IMR-90 (cell line): ENCODE measurements at regions of chr12 and their contacts with region 1.

Region 1: DNA sequence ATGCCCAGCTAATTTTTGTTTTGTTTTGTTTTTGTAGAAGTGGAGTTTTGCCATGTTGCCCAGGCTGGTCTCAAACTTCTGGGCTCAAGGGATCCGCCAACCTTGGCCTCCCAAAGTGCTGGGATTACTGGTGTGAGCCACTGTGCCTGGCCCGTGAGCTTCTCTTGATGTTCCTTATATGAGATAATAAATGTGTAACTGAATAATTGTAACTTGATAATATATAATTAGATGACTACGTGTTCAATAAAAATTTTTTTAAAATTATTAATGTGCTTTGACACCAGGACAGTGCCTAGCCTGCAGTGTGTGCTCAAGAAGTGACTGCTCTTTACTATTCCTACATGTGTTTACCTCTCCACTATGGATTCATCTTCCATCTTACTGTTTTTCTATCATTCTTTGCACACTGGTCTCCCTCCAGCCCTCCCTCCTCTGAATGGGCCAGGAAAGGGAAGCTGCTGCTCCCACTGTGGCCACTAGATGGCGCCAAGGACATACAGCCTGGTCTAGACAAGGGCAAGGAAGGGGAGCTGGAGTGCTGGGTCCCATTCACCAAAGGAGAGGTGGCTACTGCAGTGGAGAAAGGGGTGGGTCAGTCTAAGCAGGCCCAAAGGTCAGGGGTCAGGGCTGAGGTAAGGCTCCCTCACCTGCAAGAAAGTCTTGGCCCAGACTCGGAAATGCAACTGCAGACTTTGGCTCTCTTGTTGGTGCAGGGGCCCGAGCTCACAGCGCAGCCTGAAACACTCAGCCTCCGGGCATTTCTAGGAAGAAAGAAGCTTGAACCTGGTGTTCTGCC is 14.7 kb upstream of the ZNF385A start:
- DNase-seq: peak; percentile 78
- ATAC-seq: peak; percentile 96
- H3K4me3 ChIP-seq: no peak overlapping the region
- H3K27ac ChIP-seq: no peak overlapping the region
- H3K4me1 ChIP-seq: no peaks in the 10 kb centered on the region
- H3K27me3 ChIP-seq: no peaks in the 10 kb centered on the region
- CTCF ChIP-seq: peak; percentile 98
- POLR2A ChIP-seq: no peak
- RAD21 ChIP-seq: peak; percentile 97

Region 2: DNA sequence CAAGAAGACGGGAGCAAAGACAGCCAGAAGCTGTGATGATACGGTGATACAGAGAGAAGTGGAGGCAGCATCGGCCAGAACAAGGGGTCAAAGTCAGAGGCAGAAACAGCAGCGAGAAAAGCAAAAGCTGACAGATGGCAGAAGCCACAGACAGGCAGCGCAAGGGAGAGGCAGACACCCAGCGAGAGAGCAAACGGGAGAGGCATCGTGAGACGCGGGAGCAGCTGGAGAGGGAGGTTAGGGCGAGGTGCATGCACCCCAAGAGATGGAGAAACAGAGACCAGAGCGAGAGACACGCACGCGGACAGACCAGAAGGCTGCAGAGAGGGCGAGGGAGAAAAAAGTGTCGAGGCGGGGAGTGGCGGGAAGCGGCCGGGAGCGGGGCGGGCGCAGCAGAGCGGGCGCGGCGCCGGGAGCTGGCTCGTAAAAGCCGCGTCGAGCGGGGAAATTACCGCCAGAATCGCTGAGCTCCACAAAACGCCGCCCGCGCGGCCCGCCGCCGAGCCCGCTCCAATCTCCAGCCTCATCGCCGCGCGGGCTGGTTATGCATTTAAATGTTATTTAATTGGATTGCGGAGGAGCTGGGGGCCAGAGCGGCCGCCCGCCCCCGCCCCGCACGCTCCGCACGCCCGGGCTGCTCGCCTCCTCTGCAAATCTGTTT is 226.0 kb before region 1 on chr12:
- CTCF ChIA-PET with region 1: no interaction called
- POLR2A ChIA-PET with region 1: no interaction called
- dilution Hi-C with region 1: no loop called
- in situ Hi-C with region 1: no loop called
- intact Hi-C with region 1: no loop called
- DNase-seq: no peak
- ATAC-seq: peak; percentile 81
- H3K4me3 ChIP-seq: peak overlapping the region; percentile 31
- H3K27ac ChIP-seq: no peak overlapping the region
- H3K4me1 ChIP-seq: no peaks in the 10 kb centered on the region
- H3K27me3 ChIP-seq: peaks cover 56% of the 10 kb centered on the region
- CTCF ChIP-seq: no peak
- POLR2A ChIP-seq: no peak
- RAD21 ChIP-seq: no peak

Region 3: DNA sequence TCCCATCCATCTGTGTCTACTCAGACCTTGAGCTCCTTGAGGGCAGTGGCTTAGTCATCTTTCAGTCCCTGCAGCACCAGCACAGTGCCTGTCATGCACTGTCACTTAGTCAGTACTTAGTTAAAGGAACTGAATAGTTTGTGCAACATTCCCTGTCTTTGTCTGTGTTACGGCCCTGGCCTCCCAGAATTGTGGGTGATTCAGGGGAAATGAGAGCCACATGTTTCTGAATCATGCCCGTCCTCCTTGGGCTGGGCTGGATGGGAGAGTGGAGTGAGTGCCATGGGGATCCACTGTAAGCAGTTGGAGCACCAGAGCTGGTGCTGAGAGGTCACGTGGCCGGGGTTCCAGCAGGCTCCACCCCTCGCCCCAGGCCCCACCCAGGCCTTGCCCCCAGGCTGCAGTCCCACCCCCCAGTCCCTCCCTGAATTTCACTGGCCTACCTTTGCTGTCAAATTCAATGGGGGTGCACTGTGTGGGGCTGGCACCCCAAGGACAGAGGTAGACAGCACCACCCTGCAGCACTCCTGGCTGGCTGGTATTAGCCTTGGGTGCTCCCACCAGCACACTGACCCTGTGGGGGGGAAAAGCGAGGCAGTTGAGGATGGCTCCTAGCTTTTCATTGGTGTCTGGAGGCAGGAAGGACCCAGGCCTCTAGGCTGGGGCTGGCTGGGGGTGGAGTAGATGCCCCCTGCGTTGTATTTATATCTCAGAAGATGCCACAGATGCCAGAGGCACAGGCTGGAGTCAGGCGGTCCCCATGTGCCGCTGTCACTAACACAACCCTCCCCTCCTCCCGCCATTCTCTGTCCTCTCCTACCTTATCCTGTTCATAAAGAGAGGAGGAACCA is 12.4 kb after region 1 on chr12:
- CTCF ChIA-PET with region 1: interaction called, 15 read pairs
- POLR2A ChIA-PET with region 1: no interaction called
- dilution Hi-C with region 1: no loop called
- in situ Hi-C with region 1: no loop called
- intact Hi-C with region 1: no loop called
- DNase-seq: peak; percentile 96
- ATAC-seq: peak; percentile 89
- H3K4me3 ChIP-seq: no peak overlapping the region
- H3K27ac ChIP-seq: peak overlapping the region; percentile 36
- H3K4me1 ChIP-seq: peaks cover 30% of the 10 kb centered on the region
- H3K27me3 ChIP-seq: no peaks in the 10 kb centered on the region
- CTCF ChIP-seq: no peak
- POLR2A ChIP-seq: 0 out of 2 replicates have a peak, but pooled peaks have one; percentile 32
- RAD21 ChIP-seq: no peak; the same call in 1 of the 2 replicates

Region 4: GRCh38 chr12:54431911-54432814 is 33.0 kb after region 1 on chr12:
- CTCF ChIA-PET with region 1: interaction called, 77 read pairs
- POLR2A ChIA-PET with region 1: no interaction called
- dilution Hi-C with region 1: no loop called
- in situ Hi-C with region 1: no loop called
- intact Hi-C with region 1: no loop called
- DNase-seq: peak; percentile 80
- ATAC-seq: peak; percentile 58
- H3K4me3 ChIP-seq: no peak overlapping the region
- H3K27ac ChIP-seq: no peak overlapping the region
- H3K4me1 ChIP-seq: peaks cover 22% of the 10 kb centered on the region
- H3K27me3 ChIP-seq: no peaks in the 10 kb centered on the region
- CTCF ChIP-seq: no peak
- POLR2A ChIP-seq: no peak
- RAD21 ChIP-seq: no peak

Region 5: DNA sequence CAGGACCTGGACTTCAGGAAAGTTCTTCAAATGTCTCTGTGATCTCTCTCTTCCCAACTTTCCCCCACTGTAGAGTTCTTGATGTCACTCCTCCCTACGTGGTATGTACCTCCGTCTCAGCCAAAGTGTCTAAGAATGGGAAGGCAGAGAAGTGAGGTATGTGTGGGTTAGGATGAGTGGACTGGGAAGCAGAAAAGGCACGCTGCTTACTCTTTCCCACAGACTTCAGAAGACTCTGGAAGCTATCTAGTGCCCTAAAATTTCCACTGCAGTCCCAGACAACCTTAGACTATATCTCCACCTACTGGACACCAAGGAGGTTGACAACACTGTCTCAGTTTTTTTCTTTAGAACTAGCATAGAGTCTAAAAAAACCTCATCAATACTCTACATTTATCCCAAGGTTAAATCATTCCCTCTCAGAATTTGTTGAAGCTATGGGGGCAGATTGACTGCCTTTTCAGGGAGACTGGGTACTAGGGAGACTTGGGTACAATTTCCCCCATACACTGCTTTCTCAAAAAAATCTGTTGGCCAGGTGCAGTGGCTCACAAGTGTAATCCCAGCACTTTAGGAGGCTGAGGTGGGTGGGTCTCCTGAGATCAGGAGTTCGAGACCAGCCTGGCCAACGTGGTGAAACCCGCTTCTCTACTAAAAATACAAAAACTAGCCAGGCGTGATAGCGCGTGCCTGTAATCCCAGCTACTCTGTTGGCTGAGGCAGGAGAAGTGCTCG is 40.5 kb after region 1 on chr12:
- CTCF ChIA-PET with region 1: interaction called, 77 read pairs
- POLR2A ChIA-PET with region 1: no interaction called
- dilution Hi-C with region 1: no loop called
- in situ Hi-C with region 1: loop called (anchors 5 kb)
- intact Hi-C with region 1: loop called (anchors 1 kb)
- DNase-seq: peak; percentile 86
- ATAC-seq: peak; percentile 98
- H3K4me3 ChIP-seq: no peak overlapping the region
- H3K27ac ChIP-seq: no peak overlapping the region
- H3K4me1 ChIP-seq: peaks cover 4% of the 10 kb centered on the region
- H3K27me3 ChIP-seq: peaks cover 10% of the 10 kb centered on the region
- CTCF ChIP-seq: peak; percentile 95
- POLR2A ChIP-seq: no peak
- RAD21 ChIP-seq: peak; percentile 96

Region 6: GRCh38 chr12:54853995-54854566 is 454.9 kb after region 1 on chr12 and contains the start of gene MUCL1:
- CTCF ChIA-PET with region 1: no interaction called
- POLR2A ChIA-PET with region 1: no interaction called
- dilution Hi-C with region 1: no loop called
- in situ Hi-C with region 1: no loop called
- intact Hi-C with region 1: no loop called
- DNase-seq: peak; percentile 57
- ATAC-seq: peak; percentile 96
- H3K4me3 ChIP-seq: no peak within 1 kb of the TSS
- H3K27ac ChIP-seq: no peak within 1 kb of the TSS
- H3K4me1 ChIP-seq: no peaks in the 10 kb centered on the region
- H3K27me3 ChIP-seq: no peaks in the 10 kb centered on the region
- CTCF ChIP-seq: peak; percentile 80
- POLR2A ChIP-seq: no peak
- RAD21 ChIP-seq: peak; percentile 78
- total RNA-seq, gene MUCL1: not detected in 2 replicates

Region 7: DNA sequence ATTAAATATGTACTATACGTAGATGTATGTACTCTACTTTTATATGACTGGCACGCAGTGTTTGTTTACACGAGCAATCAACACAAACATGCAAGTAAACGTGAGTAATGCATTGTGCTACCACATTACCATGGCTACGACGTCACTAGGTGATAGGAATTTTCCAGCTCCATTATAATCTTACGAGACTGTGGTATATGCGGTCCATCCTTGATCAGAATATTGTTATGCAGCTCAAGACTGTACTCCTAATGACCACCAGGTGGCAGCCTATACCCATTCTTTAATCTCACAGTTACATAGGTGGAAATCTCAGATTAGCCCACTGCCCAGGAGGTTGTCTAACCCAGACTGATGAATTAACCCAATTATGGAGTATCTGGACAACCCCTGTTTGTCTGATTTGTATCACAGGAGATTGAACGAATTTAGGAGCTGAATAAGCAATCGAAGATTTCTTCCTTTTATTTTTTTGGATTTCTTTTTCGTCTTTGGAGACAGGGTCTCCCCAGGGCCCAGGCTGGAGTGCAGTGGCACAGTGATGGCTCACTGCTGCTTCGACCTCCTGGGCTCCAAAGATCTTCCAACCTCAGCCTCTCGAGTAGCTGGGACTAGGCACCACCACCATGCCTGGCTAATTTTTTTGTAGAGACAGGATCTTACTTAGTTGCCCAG is 594.1 kb after region 1 on chr12:
- CTCF ChIA-PET with region 1: no interaction called
- POLR2A ChIA-PET with region 1: no interaction called
- dilution Hi-C with region 1: no loop called
- in situ Hi-C with region 1: no loop called
- intact Hi-C with region 1: no loop called
- DNase-seq: peak; percentile 60
- ATAC-seq: peak; percentile 96
- H3K4me3 ChIP-seq: no peak overlapping the region
- H3K27ac ChIP-seq: no peak overlapping the region
- H3K4me1 ChIP-seq: no peaks in the 10 kb centered on the region
- H3K27me3 ChIP-seq: no peaks in the 10 kb centered on the region
- CTCF ChIP-seq: peak; percentile 76
- POLR2A ChIP-seq: no peak
- RAD21 ChIP-seq: peak; percentile 74